ENCODE measurements at regions of chr11 and their contacts with region 1.

Region 1: GRCh38 chr11:134253188-134253993 is at the starts of genes ACAD8 and THYN1:
- DNase-seq: peak; percentile 94 to 97 (median 95)
- H3K4me3 ChIP-seq: peak within 1 kb of the TSS; percentile 71 to 93
- H3K4me3 Mint-ChIP-seq: peak within 1 kb of the TSS; percentile 91 to 96 (median 94)
- H3K27ac ChIP-seq: peak within 1 kb of the TSS; percentile 62
- H3K27ac Mint-ChIP-seq: peak within 1 kb of the TSS; percentile 54 to 91 (median 89)
- H3K4me1 ChIP-seq: peaks cover 30% of the 10 kb centered on the region
- H3K4me1 Mint-ChIP-seq: peaks cover 21 to 43% (median 34%) of the 10 kb centered on the region in 4 donors
- H3K27me3 ChIP-seq: no peaks in the 10 kb centered on the region
- H3K27me3 Mint-ChIP-seq: no peaks in the 10 kb centered on the region
- total RNA-seq, gene ACAD8: 36.9 to 38.6 TPM
- total RNA-seq, gene THYN1: 59.3 to 70.8 TPM

Region 2: GRCh38 chr11:134331354-134332188 is 78.2 kb after region 1 on chr11 and contains the start of gene GLB1L2:
- CTCF ChIA-PET with region 1: no interaction called
- POLR2A ChIA-PET with region 1: interaction called, 4 read pairs
- intact Hi-C with region 1: loop called (anchors 2 kb)
- DNase-seq: peak; percentile 77 to 83 (median 80)
- H3K4me3 ChIP-seq: peak within 1 kb of the TSS in 1 of 2 donors; percentile 59
- H3K4me3 Mint-ChIP-seq: peak within 1 kb of the TSS; percentile 85 to 95 (median 91)
- H3K27ac ChIP-seq: no peak within 1 kb of the TSS
- H3K27ac Mint-ChIP-seq: peak within 1 kb of the TSS; percentile 20 to 90 (median 84)
- H3K4me1 ChIP-seq: peaks cover 14% of the 10 kb centered on the region
- H3K4me1 Mint-ChIP-seq: peaks cover 7 to 22% (median 12%) of the 10 kb centered on the region in 4 donors
- H3K27me3 ChIP-seq: no peaks in the 10 kb centered on the region
- H3K27me3 Mint-ChIP-seq: peaks cover 0 to 4% of the 10 kb centered on the region in 2 donors
- total RNA-seq, gene GLB1L2: 1.2 to 1.5 TPM

Region 3: DNA sequence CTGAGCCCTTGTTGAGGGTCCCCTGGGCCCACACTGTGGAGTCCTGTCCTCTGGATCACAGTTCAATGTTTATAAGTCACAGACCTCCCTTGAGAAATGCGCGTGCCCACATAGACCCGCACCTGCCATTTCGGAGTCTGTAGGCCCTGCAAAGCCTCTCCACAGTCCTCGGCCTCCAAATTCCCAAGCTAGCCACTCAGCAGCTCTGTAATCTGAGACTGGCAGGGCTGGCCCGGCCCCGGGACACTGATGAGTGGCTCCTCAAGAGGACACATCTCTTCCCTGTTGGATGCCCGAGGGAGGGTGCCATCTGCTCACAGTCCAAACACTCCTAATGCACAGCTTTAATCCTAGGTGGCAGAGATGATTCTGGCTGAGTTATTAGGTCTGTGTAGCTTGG is 119.6 kb after region 1 on chr11:
- CTCF ChIA-PET with region 1: no interaction called
- POLR2A ChIA-PET with region 1: no interaction called
- intact Hi-C with region 1: no loop called
- DNase-seq: peak in 1 of 5 donors; percentile 22
- H3K4me3 ChIP-seq: no peak overlapping the region
- H3K4me3 Mint-ChIP-seq: no peak overlapping the region
- H3K27ac ChIP-seq: no peak overlapping the region
- H3K27ac Mint-ChIP-seq: no peak overlapping the region
- H3K4me1 ChIP-seq: no peaks in the 10 kb centered on the region
- H3K4me1 Mint-ChIP-seq: no peaks in the 10 kb centered on the region
- H3K27me3 ChIP-seq: no peaks in the 10 kb centered on the region
- H3K27me3 Mint-ChIP-seq: peaks cover 0 to 2% of the 10 kb centered on the region in 2 donors

Region 4: GRCh38 chr11:134439138-134439733 is 185.8 kb after region 1 on chr11:
- CTCF ChIA-PET with region 1: no interaction called
- POLR2A ChIA-PET with region 1: no interaction called
- intact Hi-C with region 1: no loop called
- DNase-seq: no peak
- H3K4me3 ChIP-seq: no peak overlapping the region
- H3K4me3 Mint-ChIP-seq: peak overlapping the region in 1 of 8 donors; percentile 27
- H3K27ac ChIP-seq: no peak overlapping the region
- H3K27ac Mint-ChIP-seq: no peak overlapping the region
- H3K4me1 ChIP-seq: no peaks in the 10 kb centered on the region
- H3K4me1 Mint-ChIP-seq: no peaks in the 10 kb centered on the region
- H3K27me3 ChIP-seq: no peaks in the 10 kb centered on the region
- H3K27me3 Mint-ChIP-seq: peaks cover 10 to 20% of the 10 kb centered on the region in 2 donors